Activated B cell treated with CpG ODN at 0.5 μM for 24 hours (primary cell): ENCODE measurements at regions of chr12 and their contacts with region 1.

Region 1: DNA sequence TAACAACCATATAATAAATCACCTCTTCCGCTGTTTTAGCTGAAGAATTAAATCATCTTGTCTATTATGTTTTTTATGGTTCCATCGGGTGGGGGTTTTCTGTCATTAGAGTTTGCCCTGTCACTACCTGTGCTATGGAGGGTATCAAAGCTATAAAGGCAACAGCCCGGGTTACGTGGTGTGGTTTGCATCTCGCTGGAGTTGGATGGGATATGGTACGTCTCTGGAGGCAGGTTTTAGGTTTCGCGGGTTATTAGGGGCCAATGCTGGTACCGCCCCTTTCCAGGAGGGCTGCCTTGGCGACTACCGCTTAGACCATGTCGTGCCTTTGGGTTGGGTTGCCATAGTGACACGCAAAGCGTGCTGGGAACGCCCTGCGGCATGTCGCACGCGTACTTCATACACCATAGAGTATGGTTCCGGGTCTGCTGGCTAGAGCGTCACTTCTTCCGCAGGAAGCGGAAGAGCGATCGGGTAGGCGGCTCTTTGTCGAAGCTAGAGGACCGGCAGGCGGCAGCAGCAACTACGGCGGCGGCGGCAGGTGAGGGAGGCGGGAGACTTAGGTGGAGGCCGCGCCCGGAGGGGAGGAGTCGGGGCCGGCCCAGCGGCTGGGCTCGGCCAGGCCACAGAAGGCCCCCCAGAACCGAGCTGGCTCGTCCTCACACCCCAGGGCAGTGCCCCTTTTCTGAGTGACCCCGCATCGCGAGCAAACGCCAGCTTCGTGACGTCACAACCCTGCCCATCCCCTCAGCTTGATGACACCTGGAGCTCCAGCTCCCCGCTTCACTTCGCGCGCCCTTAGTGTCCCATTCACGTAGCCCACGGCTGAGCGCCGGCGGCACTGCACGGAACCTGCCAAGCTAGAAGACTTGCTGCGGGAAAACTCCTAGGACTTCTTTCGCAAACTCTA is at the start of gene ZC3H10:
- DNase-seq: peak; percentile 89
- ATAC-seq: peak; percentile 76
- H3K4me3 Mint-ChIP-seq: peak within 1 kb of the TSS; percentile 100
- H3K27ac Mint-ChIP-seq: peak within 1 kb of the TSS; percentile 99
- H3K4me1 Mint-ChIP-seq: peaks cover 37% of the 10 kb centered on the region
- H3K27me3 Mint-ChIP-seq: no peaks in the 10 kb centered on the region
- CTCF ChIP-seq: no peak
- total RNA-seq, gene ZC3H10: 15.4 and 17.1 TPM in 2 replicates

Region 2: GRCh38 chr12:55996715-55997534 is 121.1 kb before region 1 on chr12 and contains the start of gene SUOX:
- CTCF ChIA-PET with region 1: interaction called, 3 read pairs
- POLR2A ChIA-PET with region 1: interaction called, 5 read pairs
- intact Hi-C with region 1: loop called (anchors 2 kb)
- DNase-seq: no peak
- ATAC-seq: peak; percentile 75
- H3K4me3 Mint-ChIP-seq: peak within 1 kb of the TSS; percentile 78
- H3K27ac Mint-ChIP-seq: peak within 1 kb of the TSS; percentile 18
- H3K4me1 Mint-ChIP-seq: peaks cover 21% of the 10 kb centered on the region
- H3K27me3 Mint-ChIP-seq: no peaks in the 10 kb centered on the region
- CTCF ChIP-seq: no peak
- total RNA-seq, gene SUOX: 5.4 and 5.6 TPM in 2 replicates

Region 3: GRCh38 chr12:56078990-56079664 is 38.9 kb before region 1 on chr12:
- CTCF ChIA-PET with region 1: no interaction called
- POLR2A ChIA-PET with region 1: no interaction called
- intact Hi-C with region 1: no loop called
- DNase-seq: peak; percentile 52
- ATAC-seq: peak; percentile 82
- H3K4me3 Mint-ChIP-seq: peak overlapping the region; percentile 88
- H3K27ac Mint-ChIP-seq: no peak overlapping the region
- H3K4me1 Mint-ChIP-seq: peaks cover 10% of the 10 kb centered on the region
- H3K27me3 Mint-ChIP-seq: peaks cover 22% of the 10 kb centered on the region
- CTCF ChIP-seq: no peak

Region 4: GRCh38 chr12:56152318-56153033 is 34.4 kb after region 1 on chr12 and contains the start of gene MYL6B:
- CTCF ChIA-PET with region 1: interaction called, 4 read pairs
- POLR2A ChIA-PET with region 1: interaction called, 41 read pairs
- intact Hi-C with region 1: loop called (anchors 1 kb)
- DNase-seq: peak; percentile 87
- ATAC-seq: peak; percentile 89
- H3K4me3 Mint-ChIP-seq: peak within 1 kb of the TSS; percentile 93
- H3K27ac Mint-ChIP-seq: peak within 1 kb of the TSS; percentile 99
- H3K4me1 Mint-ChIP-seq: peaks cover 40% of the 10 kb centered on the region
- H3K27me3 Mint-ChIP-seq: no peaks in the 10 kb centered on the region
- CTCF ChIP-seq: no peak
- total RNA-seq, gene MYL6B: 25.2 and 36.2 TPM in 2 replicates

Region 5: GRCh38 chr12:56258057-56258819 is 140.2 kb after region 1 on chr12 and contains the start of gene ANKRD52:
- CTCF ChIA-PET with region 1: interaction called, 8 read pairs
- POLR2A ChIA-PET with region 1: interaction called, 4 read pairs
- intact Hi-C with region 1: loop called (anchors 1 kb)
- DNase-seq: peak; percentile 89
- ATAC-seq: peak; percentile 94
- H3K4me3 Mint-ChIP-seq: peak within 1 kb of the TSS; percentile 91
- H3K27ac Mint-ChIP-seq: peak within 1 kb of the TSS; percentile 77
- H3K4me1 Mint-ChIP-seq: peaks cover 21% of the 10 kb centered on the region
- H3K27me3 Mint-ChIP-seq: no peaks in the 10 kb centered on the region
- CTCF ChIP-seq: peak; percentile 28
- total RNA-seq, gene ANKRD52: 44.1 and 44.8 TPM in 2 replicates

Region 6: GRCh38 chr12:56359851-56360767 is 242.1 kb after region 1 on chr12 and contains the start of gene STAT2:
- CTCF ChIA-PET with region 1: no interaction called
- POLR2A ChIA-PET with region 1: interaction called, 6 read pairs
- intact Hi-C with region 1: loop called (anchors 1 kb)
- DNase-seq: peak; percentile 98
- ATAC-seq: peak; percentile 94
- H3K4me3 Mint-ChIP-seq: peak within 1 kb of the TSS; percentile 92
- H3K27ac Mint-ChIP-seq: peak within 1 kb of the TSS; percentile 94
- H3K4me1 Mint-ChIP-seq: peaks cover 36% of the 10 kb centered on the region
- H3K27me3 Mint-ChIP-seq: no peaks in the 10 kb centered on the region
- CTCF ChIP-seq: no peak
- total RNA-seq, gene STAT2: 159 and 177 TPM in 2 replicates

Region 7: GRCh38 chr12:56425193-56425592 is 307.2 kb after region 1 on chr12:
- CTCF ChIA-PET with region 1: no interaction called
- POLR2A ChIA-PET with region 1: no interaction called
- intact Hi-C with region 1: no loop called
- DNase-seq: no peak
- ATAC-seq: no peak
- H3K4me3 Mint-ChIP-seq: no peak overlapping the region
- H3K27ac Mint-ChIP-seq: no peak overlapping the region
- H3K4me1 Mint-ChIP-seq: no peaks in the 10 kb centered on the region
- H3K27me3 Mint-ChIP-seq: no peaks in the 10 kb centered on the region
- CTCF ChIP-seq: no peak

Region 8: DNA sequence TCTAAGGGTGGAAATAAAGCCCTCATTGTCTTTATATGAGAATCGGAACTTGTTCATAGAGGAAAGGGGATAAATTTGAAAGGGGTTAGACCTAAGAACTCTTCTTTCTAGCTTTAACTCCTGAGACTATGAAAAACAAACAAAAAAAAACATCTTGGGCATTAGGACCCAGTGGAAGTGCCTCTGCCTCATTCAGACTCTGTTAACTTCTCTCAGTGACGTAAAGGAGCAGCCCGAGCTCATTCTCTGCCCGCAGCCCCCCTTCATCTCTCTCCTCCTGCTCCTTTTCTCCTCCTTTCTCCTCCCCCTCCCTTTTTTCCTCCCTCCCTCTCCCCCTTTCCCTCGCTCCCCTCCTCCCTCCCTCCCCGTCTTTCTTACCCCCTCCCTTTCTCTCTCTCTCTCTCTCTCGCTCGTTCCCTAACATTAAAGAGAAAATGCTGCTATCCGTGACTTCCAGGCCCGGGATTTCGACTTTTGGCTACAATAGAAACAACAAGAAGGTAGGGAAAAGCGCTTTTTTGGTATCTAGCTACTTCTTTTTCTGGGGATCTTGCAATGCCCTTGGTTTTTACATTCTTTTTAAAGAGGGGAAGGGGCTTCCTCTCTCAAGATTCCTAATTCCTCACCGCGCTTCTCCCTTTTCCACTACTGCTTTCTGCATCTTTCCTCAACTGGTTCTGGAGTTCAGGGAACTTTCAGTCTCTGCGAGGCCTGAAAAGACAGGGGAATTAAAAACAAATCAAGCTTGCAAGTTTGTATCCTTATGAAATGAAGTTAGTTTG is 403.7 kb after region 1 on chr12 and contains the start of gene RBMS2:
- CTCF ChIA-PET with region 1: no interaction called
- POLR2A ChIA-PET with region 1: no interaction called
- intact Hi-C with region 1: no loop called
- DNase-seq: no peak
- ATAC-seq: peak; percentile 84
- H3K4me3 Mint-ChIP-seq: peak within 1 kb of the TSS; percentile 83
- H3K27ac Mint-ChIP-seq: peak within 1 kb of the TSS; percentile 72
- H3K4me1 Mint-ChIP-seq: peaks cover 22% of the 10 kb centered on the region
- H3K27me3 Mint-ChIP-seq: peaks cover 3% of the 10 kb centered on the region
- CTCF ChIP-seq: no peak
- total RNA-seq, gene RBMS2: 2.7 and 3.4 TPM in 2 replicates

Region 9: GRCh38 chr12:57088459-57089248 is 970.6 kb after region 1 on chr12 and contains the start of gene NAB2:
- CTCF ChIA-PET with region 1: no interaction called
- POLR2A ChIA-PET with region 1: no interaction called
- intact Hi-C with region 1: loop called (anchors 5 kb)
- DNase-seq: peak; percentile 89
- ATAC-seq: peak; percentile 66
- H3K4me3 Mint-ChIP-seq: peak within 1 kb of the TSS; percentile 91
- H3K27ac Mint-ChIP-seq: peak within 1 kb of the TSS; percentile 96
- H3K4me1 Mint-ChIP-seq: peaks cover 55% of the 10 kb centered on the region
- H3K27me3 Mint-ChIP-seq: no peaks in the 10 kb centered on the region
- CTCF ChIP-seq: no peak
- total RNA-seq, gene NAB2: 20.4 and 22.1 TPM in 2 replicates